ENCODE measurements at regions of chr12 and their contacts with region 1.

Region 1: DNA sequence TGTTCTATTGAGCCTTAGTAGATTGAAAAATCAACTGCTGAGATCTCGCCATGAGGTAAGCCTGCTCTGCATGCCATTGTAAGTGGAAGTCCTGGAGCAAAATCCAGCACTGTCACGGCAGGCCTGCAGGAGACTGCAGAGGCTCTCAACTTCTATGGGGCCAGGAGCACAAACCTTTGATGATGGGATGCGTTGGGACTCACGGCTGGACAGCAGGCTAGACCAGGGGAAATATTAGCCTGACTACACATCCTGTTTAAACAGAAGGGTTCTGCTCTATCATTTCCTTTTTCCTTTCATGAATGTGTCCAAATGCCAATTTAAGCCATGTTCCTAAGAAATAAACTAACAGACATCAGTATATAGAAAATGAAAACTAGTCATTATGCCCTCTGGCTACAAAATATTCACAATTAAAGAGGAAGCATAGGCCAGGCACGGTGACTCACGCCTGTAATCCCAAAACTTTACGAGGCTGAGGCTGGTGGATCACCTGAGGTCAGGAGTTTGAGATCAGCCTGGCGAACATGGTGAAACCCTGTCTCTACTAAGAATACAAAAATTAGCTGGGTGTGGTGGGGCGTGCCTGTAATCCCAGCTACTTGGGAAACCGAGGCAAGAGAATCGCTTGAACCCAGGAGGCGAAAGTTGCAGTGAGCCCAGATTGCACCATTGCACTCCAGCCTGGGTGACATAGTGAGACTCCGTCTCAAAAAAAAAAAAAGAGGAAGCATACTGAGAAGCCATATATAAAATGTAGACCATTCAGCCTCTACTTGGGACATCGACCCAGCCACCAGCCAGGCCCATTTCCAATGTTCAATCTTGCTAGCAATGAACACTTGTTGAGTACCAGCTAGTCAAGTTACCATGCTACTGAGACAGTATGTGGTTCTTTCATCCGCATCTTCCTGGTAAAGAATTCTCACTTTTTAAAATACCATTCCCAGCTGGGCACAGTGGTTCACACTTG is 33.7 kb upstream of the RASSF8 start:
- DNase-seq: no peak
- H3K4me3 Mint-ChIP-seq: no peak overlapping the region
- H3K27ac Mint-ChIP-seq: no peak overlapping the region
- H3K4me1 Mint-ChIP-seq: no peaks in the 10 kb centered on the region
- H3K27me3 Mint-ChIP-seq: no peaks in the 10 kb centered on the region

Region 2: DNA sequence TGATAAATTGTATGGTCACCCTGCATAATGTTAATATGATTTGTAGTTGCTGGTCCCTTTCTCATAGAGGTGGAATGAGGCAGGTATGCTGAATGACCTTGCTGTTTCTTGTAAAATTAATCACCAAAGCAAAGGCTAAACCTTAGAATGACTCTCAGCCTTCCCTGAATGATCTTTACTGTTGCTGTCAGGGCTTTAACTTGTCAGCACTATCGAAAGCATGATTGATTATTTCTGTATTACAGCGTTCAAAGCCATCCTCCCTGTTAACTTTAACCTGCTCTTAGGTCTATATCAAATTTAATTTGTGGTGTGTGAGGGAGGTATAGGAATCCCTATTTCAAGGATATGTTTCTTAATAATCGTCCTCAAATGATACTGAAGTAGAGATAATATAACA is 56.8 kb after region 1 on chr12:
- CTCF ChIA-PET with region 1: no interaction called
- POLR2A ChIA-PET with region 1: interaction called, 12 read pairs
- DNase-seq: no peak
- H3K4me3 Mint-ChIP-seq: no peak overlapping the region
- H3K27ac Mint-ChIP-seq: no peak overlapping the region
- H3K4me1 Mint-ChIP-seq: no peaks in the 10 kb centered on the region
- H3K27me3 Mint-ChIP-seq: peaks cover 3% of the 10 kb centered on the region